ENCODE measurements at regions of chr4 and their contacts with region 1.

Region 1: GRCh38 chr4:78864405-78865024 is 74.7 kb downstream of the PAQR3 start:
- DNase-seq: peak; percentile 39
- CTCF ChIP-seq: peak; percentile 54

Region 2: DNA sequence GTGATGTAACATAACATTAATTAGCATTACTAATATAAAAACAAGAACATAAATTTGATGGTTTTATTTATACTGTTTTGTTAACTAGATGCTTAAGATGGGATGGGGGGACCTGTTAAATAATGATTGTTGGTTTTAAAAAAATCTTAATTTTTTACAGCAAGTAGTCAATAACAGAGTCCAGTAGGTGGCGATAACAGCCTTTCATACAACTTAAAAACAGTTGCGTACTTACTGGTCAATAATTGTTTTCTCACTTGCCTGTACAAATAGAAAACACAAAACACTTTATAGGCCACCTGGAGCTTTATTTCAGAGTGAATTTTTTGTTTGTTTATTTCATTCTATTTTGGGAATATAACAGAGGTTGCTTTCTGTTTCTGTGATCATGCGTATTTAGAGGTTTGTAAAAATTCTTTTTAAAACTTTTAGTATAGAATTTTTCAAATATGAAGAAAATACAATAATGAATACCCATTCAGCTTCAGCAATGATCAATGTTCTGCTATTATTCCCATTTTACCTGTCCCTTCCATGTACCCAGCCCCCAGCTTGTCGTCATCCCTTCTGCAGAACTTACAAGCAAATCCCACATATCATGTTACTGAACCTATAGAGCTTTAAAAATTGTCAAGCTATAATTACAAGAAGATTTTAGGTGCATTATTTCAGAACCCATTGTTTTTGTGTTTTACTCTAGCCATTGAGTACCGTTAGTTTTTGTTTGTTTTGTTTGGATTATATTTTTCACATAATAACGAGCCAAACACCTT is 904.8 kb before region 1 on chr4:
- in situ Hi-C with region 1: loop called (anchors 25 kb)
- DNase-seq: peak; percentile 34
- CTCF ChIP-seq: peak; percentile 31

Region 3: GRCh38 chr4:78356251-78356786 is 508.2 kb before region 1 on chr4:
- in situ Hi-C with region 1: no loop called
- DNase-seq: no peak
- CTCF ChIP-seq: no peak

Region 4: GRCh38 chr4:78612398-78613178 is 251.9 kb before region 1 on chr4:
- in situ Hi-C with region 1: loop called (anchors 5 kb)
- DNase-seq: peak; percentile 14
- CTCF ChIP-seq: peak; percentile 37

Measured in GM13976 (cell line).